Heart left ventricle (tissue), 16 donors: ENCODE measurements at regions of chr18 and their contacts with region 1.

Region 1: DNA sequence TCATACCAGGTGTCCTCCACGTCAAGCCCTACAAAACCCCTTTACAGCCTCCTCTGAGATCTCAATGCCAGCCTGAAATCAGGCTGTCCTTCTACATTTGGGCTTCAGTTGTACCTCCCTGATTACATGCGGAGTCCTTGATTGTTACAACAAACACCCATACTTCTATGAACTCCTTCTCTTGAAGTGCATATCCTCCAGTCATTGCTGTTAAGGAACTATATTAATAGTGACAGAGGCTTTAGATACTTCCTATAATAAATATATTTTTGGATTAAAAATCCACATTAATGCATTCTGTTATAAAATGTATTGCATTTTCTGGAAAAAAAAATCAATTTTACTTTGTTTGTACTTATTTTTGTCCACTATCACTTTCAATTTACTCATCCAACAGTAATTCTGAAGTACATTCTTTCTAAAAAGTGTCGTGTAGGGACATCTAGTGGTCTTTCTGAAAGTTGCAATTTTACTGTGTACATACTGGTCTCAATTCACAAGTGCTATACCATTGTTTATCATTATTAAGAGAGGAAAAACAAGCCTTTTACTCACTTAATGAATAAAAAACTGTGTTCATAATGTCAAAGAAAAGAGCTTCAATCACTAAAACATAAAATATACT is 316.4 kb downstream of the DSEL start:
- DNase-seq: no peak
- ATAC-seq: no peak
- H3K4me3 ChIP-seq: no peak overlapping the region
- H3K27ac ChIP-seq: no peak overlapping the region
- H3K4me1 ChIP-seq: no peaks in the 10 kb centered on the region
- H3K27me3 ChIP-seq: peaks cover 0 to 16% (median 0%) of the 10 kb centered on the region in 9 donors
- CTCF ChIP-seq: peak; percentile 32 to 75 (median 56)
- POLR2A ChIP-seq: no peak

Region 2: GRCh38 chr18:67104700-67105284 is 95.3 kb before region 1 on chr18:
- intact Hi-C with region 1: loop called in 8 of 10 experiments (anchors 2 to 10 kb)
- DNase-seq: peak in 2 of 5 donors; percentile 38 to 49
- ATAC-seq: peak in 3 of 4 donors; percentile 60 to 74 (median 65)
- H3K4me3 ChIP-seq: no peak overlapping the region
- H3K27ac ChIP-seq: no peak overlapping the region
- H3K4me1 ChIP-seq: no peaks in the 10 kb centered on the region
- H3K27me3 ChIP-seq: no peaks in the 10 kb centered on the region
- CTCF ChIP-seq: peak; percentile 24 to 68 (median 48)
- POLR2A ChIP-seq: no peak

Region 3: GRCh38 chr18:67117804-67118203 is 82.3 kb before region 1 on chr18:
- intact Hi-C with region 1: loop called in 1 of 10 experiments (anchors 10 kb)
- DNase-seq: no peak
- ATAC-seq: no peak
- H3K4me3 ChIP-seq: no peak overlapping the region
- H3K27ac ChIP-seq: no peak overlapping the region
- H3K4me1 ChIP-seq: no peaks in the 10 kb centered on the region
- H3K27me3 ChIP-seq: no peaks in the 10 kb centered on the region
- CTCF ChIP-seq: no peak
- POLR2A ChIP-seq: no peak

Region 4: GRCh38 chr18:67151366-67151765 is 48.7 kb before region 1 on chr18:
- intact Hi-C with region 1: no loop called
- DNase-seq: no peak
- ATAC-seq: no peak
- H3K4me3 ChIP-seq: no peak overlapping the region
- H3K27ac ChIP-seq: no peak overlapping the region
- H3K4me1 ChIP-seq: no peaks in the 10 kb centered on the region
- H3K27me3 ChIP-seq: no peaks in the 10 kb centered on the region
- CTCF ChIP-seq: no peak
- POLR2A ChIP-seq: no peak